HCT116 (cell line): ENCODE measurements at regions of chrX and their contacts with region 1.

Region 1: DNA sequence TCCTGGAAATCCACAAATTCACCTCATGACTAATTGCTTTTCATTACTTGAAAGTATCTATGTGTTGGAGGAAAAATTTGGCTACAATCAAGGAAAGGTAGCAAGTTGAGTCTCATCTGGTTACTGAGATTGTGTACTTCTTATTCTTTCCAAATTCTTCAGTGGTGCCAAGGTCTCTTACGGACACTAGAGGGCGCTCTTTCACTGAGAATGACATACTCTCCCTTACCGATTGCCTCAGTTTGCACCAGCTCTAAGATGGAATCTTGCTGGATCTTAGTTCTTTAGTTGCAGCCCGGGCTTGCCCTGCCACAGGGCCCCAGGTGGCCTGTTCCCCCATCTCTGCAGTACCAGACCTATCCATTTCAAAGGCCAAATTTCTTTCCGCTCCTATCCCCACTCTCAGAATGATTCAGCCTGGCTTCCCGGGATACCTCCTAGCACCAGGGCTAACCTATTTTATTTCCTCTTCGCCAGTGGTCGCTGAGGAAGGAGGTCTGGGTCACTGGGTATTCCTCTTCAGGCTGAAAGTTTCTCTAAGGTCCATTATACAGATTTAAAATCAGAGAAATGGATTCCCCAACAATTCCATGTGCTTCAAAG is 24.6 kb upstream of the GPR50 start:
- DNase-seq: peak; percentile 13
- ATAC-seq: peak; percentile 84
- H3K4me3 ChIP-seq: no peak overlapping the region
- H3K27ac ChIP-seq: no peak overlapping the region
- H3K4me1 ChIP-seq: no peaks in the 10 kb centered on the region
- H3K27me3 ChIP-seq: peaks cover 6% of the 10 kb centered on the region; the same call in 1 of the 2 replicates
- CTCF ChIP-seq: peak; percentile 40 to 72 (median 53); a peak in 5 of 6 replicates
- POLR2A ChIP-seq: no peak
- RAD21 ChIP-seq: peak; percentile 78

Region 2: DNA sequence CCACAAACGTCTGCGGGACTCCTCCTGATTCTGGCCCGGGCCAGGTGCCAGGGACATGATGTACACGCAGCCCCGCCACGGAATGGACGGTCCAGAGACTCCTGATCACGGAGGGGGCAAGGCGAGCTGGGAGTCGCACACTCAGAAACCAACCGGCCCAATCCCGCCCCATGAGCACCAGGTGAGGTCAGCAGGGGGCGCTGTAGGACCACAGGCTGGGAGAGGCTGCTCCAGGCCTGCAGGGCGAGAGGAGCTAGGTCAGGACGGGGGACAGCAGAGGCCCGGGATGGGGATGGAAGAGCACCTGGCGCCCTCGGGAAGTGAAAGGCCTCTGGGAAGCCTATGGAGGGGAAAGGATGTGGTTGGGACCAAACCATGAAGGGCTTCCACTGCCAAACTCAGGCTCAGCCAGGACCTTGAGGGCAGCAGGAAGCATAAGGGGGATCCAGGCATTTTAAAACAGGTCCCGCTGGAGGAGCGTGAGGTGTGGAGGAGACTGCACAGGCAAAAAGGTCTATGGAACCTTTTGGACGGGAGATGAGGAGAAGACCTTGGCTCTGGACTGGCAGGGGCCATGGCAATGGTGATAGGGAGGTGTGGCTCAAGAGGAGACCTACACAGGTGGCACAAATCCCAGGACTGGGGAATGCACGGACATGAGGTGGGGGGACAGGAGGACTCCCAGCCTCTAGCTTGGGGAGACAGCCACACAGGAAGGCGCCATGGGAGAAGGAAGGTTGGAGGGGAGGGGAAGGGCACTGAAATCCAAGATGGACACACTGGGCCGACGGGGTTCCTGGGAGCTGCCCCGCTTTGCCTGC is 379.4 kb before region 1 on chrX:
- CTCF ChIA-PET with region 1: interaction called, 5 read pairs
- POLR2A ChIA-PET with region 1: no interaction called
- RAD21 ChIA-PET with region 1: interaction called in 1 of 2 experiments, 3 read pairs
- intact Hi-C with region 1: loop called (anchors 5 kb)
- DNase-seq: peak; percentile 13
- ATAC-seq: peak; percentile 98
- H3K4me3 ChIP-seq: no peak overlapping the region
- H3K27ac ChIP-seq: no peak overlapping the region
- H3K4me1 ChIP-seq: no peaks in the 10 kb centered on the region
- H3K27me3 ChIP-seq: no peaks in the 10 kb centered on the region
- CTCF ChIP-seq: peak; percentile 71 to 80 (median 74)
- POLR2A ChIP-seq: no peak
- RAD21 ChIP-seq: peak; percentile 91

Region 3: DNA sequence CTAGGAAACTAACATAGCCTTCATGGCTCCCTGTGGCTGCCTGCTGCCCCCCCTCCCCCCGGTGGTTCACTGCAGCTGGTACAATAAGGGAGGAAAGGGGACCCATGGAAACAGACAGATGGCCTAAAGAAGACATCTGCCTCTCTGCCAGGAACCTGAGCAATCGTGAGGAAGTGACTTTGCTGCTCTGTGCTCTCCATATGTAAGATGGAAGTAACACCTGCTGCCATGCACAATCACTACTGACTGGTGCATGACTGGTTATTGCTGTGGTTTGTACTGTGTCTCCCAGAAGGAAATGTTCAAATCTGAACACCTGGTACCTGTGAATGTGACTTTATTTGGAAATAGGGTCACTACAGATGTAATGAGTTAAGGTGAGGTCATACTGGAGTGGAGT is 296.9 kb before region 1 on chrX:
- CTCF ChIA-PET with region 1: no interaction called
- POLR2A ChIA-PET with region 1: no interaction called
- RAD21 ChIA-PET with region 1: no interaction called
- intact Hi-C with region 1: loop called (anchors 5 kb)
- DNase-seq: no peak
- ATAC-seq: no peak
- H3K4me3 ChIP-seq: no peak overlapping the region
- H3K27ac ChIP-seq: no peak overlapping the region
- H3K4me1 ChIP-seq: no peaks in the 10 kb centered on the region
- H3K27me3 ChIP-seq: no peaks in the 10 kb centered on the region
- CTCF ChIP-seq: no peak
- POLR2A ChIP-seq: no peak
- RAD21 ChIP-seq: no peak

Region 4: GRCh38 chrX:151019856-151020255 is 131.9 kb before region 1 on chrX:
- CTCF ChIA-PET with region 1: no interaction called
- POLR2A ChIA-PET with region 1: no interaction called
- RAD21 ChIA-PET with region 1: no interaction called
- intact Hi-C with region 1: no loop called
- DNase-seq: no peak
- ATAC-seq: no peak
- H3K4me3 ChIP-seq: no peak overlapping the region
- H3K27ac ChIP-seq: no peak overlapping the region
- H3K4me1 ChIP-seq: no peaks in the 10 kb centered on the region
- H3K27me3 ChIP-seq: no peaks in the 10 kb centered on the region
- CTCF ChIP-seq: no peak
- POLR2A ChIP-seq: no peak
- RAD21 ChIP-seq: no peak

Region 5: GRCh38 chrX:151359931-151360871 is 208.4 kb after region 1 on chrX:
- CTCF ChIA-PET with region 1: interaction called, 6 read pairs
- POLR2A ChIA-PET with region 1: no interaction called
- RAD21 ChIA-PET with region 1: no interaction called
- intact Hi-C with region 1: loop called (anchors 2 kb)
- DNase-seq: no peak
- ATAC-seq: peak; percentile 96
- H3K4me3 ChIP-seq: no peak overlapping the region
- H3K27ac ChIP-seq: no peak overlapping the region
- H3K4me1 ChIP-seq: no peaks in the 10 kb centered on the region
- H3K27me3 ChIP-seq: peaks cover 8% of the 10 kb centered on the region; the same call in 1 of the 2 replicates
- CTCF ChIP-seq: peak; percentile 34 to 75 (median 67); a peak in 5 of 6 replicates
- POLR2A ChIP-seq: no peak
- RAD21 ChIP-seq: peak; percentile 57

Region 6: GRCh38 chrX:151680805-151681204 is 529.0 kb after region 1 on chrX:
- CTCF ChIA-PET with region 1: interaction called, 4 read pairs
- POLR2A ChIA-PET with region 1: no interaction called
- RAD21 ChIA-PET with region 1: no interaction called
- intact Hi-C with region 1: loop called (anchors 1 kb)
- DNase-seq: peak; percentile 32
- ATAC-seq: peak; percentile 86
- H3K4me3 ChIP-seq: no peak overlapping the region
- H3K27ac ChIP-seq: no peak overlapping the region
- H3K4me1 ChIP-seq: no peaks in the 10 kb centered on the region
- H3K27me3 ChIP-seq: peaks cover 5% of the 10 kb centered on the region; the same call in 1 of the 2 replicates
- CTCF ChIP-seq: peak; percentile 48 to 56 (median 54)
- POLR2A ChIP-seq: no peak
- RAD21 ChIP-seq: peak; percentile 77

Region 7: DNA sequence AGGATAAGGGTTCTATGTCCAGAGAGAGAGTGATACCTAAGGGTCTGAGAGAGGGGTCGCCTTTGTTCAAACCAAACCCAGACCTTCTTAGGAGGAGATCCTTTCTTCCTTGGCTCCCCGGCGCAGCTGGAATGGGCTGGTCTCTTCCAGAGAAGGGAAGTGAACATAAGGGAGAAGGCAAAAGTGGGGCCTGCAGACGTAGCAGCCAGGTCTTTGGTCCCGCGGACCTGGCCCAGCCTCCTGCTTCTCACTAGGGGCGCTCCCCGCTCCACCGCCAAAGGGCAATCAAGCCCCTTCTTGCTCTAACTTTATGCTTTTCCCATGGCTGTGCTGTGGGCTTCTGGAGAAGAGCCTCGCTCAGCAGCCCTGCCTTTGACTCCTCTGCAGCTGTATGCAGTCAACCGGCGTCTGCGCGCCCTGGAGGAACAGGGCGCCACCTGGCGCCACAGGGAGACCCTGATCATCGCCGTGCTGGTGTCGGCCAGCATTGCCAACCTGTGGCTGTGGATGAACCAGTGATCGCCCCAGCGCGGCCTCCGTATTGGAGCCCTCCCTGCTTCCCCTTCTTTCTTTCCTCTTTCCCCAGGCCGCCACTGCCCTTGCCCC is 570.6 kb after region 1 on chrX:
- CTCF ChIA-PET with region 1: no interaction called
- POLR2A ChIA-PET with region 1: no interaction called
- RAD21 ChIA-PET with region 1: interaction called in 1 of 2 experiments, 3 read pairs
- intact Hi-C with region 1: loop called (anchors 1 kb)
- DNase-seq: peak; percentile 2
- ATAC-seq: peak; percentile 99
- H3K4me3 ChIP-seq: no peak overlapping the region
- H3K27ac ChIP-seq: no peak overlapping the region
- H3K4me1 ChIP-seq: no peaks in the 10 kb centered on the region
- H3K27me3 ChIP-seq: no peaks in the 10 kb centered on the region
- CTCF ChIP-seq: peak; percentile 25 to 54 (median 48); a peak in 5 of 6 replicates
- POLR2A ChIP-seq: no peak
- RAD21 ChIP-seq: peak; percentile 41

Region 8: GRCh38 chrX:152632445-152633097 is 1480.8 kb after region 1 on chrX:
- CTCF ChIA-PET with region 1: no interaction called
- POLR2A ChIA-PET with region 1: no interaction called
- RAD21 ChIA-PET with region 1: no interaction called
- intact Hi-C with region 1: loop called (anchors 5 kb)
- DNase-seq: peak; percentile 16
- ATAC-seq: 0 out of 2 replicates have a peak, but pooled peaks have one; percentile 47
- H3K4me3 ChIP-seq: no peak overlapping the region
- H3K27ac ChIP-seq: no peak overlapping the region
- H3K4me1 ChIP-seq: peaks cover 0 to 12% of the 10 kb centered on the region in 2 experiments; a peak in 2 of 4 replicates
- H3K27me3 ChIP-seq: peaks cover 17% of the 10 kb centered on the region; the same call in 1 of the 2 replicates
- CTCF ChIP-seq: peak; percentile 56 to 68 (median 65); a peak in 5 of 6 replicates
- POLR2A ChIP-seq: no peak
- RAD21 ChIP-seq: peak; percentile 71